A673 (cell line): ENCODE measurements at regions of chr11 and their contacts with region 1.

Region 1: GRCh38 chr11:61378713-61379313 is 13.6 kb upstream of the TMEM216 start:
- DNase-seq: peak; percentile 92
- H3K4me3 ChIP-seq: no peak overlapping the region
- H3K27ac ChIP-seq: peak overlapping the region; percentile 69
- H3K4me1 ChIP-seq: peaks cover 12% of the 10 kb centered on the region
- H3K27me3 ChIP-seq: no peaks in the 10 kb centered on the region
- CTCF ChIP-seq: no peak

Region 2: GRCh38 chr11:61361686-61362541 is 16.9 kb before region 1 on chr11 and contains the starts of genes CYB561A3 and TMEM138:
- CTCF ChIA-PET with region 1: no interaction called
- POLR2A ChIA-PET with region 1: interaction called, 8 read pairs
- intact Hi-C with region 1: loop called (anchors 2 kb)
- DNase-seq: peak; percentile 98
- H3K4me3 ChIP-seq: peak within 1 kb of the TSS; percentile 72
- H3K27ac ChIP-seq: peak within 1 kb of the TSS; percentile 99
- H3K4me1 ChIP-seq: peaks cover 15% of the 10 kb centered on the region
- H3K27me3 ChIP-seq: no peaks in the 10 kb centered on the region
- CTCF ChIP-seq: no peak
- total RNA-seq, gene CYB561A3: 42.1 and 54.7 TPM in 2 replicates
- total RNA-seq, gene TMEM138: 58.8 and 82.8 TPM in 2 replicates